Activated CD4-positive, alpha-beta memory T cell treated with anti-CD3 and anti-CD28 coated beads for 36 hours (primary cell): ENCODE measurements at regions of chr2 and their contacts with region 1.

Region 1: DNA sequence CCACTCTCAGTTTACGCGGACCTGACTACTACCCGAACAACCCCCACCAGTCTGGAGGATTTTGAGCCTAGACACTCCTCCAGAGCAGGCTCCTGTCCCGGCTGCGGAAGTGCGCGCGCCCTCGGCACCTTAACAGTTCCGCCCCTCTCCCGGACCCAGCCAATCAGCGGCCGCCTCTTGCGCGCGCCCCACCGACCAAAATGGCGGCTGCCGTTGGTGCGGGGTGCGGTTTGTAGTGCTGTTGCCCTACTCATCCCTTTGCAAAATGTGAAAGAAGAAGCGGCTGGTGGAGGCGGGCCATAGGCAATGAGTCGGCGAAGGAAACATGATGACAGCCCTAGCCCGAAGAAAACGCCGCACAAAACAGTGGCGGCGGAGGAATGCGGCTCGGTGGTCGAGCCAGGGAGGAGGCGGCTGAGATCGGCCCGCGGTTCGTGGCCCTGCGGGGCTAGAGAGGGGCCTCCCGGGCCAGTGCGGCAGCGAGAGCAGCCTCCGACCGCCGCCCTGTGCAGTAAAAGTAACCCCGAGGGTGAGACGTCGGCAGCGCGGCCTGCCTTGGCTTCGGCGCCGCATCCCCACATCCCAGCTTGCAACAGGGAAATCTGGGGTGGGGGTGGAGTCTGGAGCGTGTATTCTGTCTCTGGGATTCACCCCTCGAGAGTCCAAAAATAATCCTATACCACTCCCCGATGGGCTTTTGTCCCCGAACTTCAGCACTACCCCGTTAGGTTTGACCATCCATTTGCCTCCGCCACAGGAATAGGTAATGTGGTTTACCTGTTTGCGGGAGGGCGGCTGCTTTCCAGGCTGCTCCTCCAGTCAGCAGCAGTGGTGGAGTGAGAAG is at the start of gene ETAA1:
- DNase-seq: peak; percentile 95
- H3K4me3 Mint-ChIP-seq: peak within 1 kb of the TSS; percentile 98
- H3K27ac Mint-ChIP-seq: peak within 1 kb of the TSS; percentile 98
- H3K4me1 Mint-ChIP-seq: peaks cover 15% of the 10 kb centered on the region
- H3K27me3 Mint-ChIP-seq: no peaks in the 10 kb centered on the region
- total RNA-seq, gene ETAA1: 10.8 to 11.7 TPM

Region 2: GRCh38 chr2:67096886-67097285 is 300.5 kb before region 1 on chr2:
- CTCF ChIA-PET with region 1: no interaction called
- POLR2A ChIA-PET with region 1: no interaction called
- intact Hi-C with region 1: no loop called
- DNase-seq: no peak
- H3K4me3 Mint-ChIP-seq: no peak overlapping the region
- H3K27ac Mint-ChIP-seq: no peak overlapping the region
- H3K4me1 Mint-ChIP-seq: no peaks in the 10 kb centered on the region
- H3K27me3 Mint-ChIP-seq: no peaks in the 10 kb centered on the region

Region 3: DNA sequence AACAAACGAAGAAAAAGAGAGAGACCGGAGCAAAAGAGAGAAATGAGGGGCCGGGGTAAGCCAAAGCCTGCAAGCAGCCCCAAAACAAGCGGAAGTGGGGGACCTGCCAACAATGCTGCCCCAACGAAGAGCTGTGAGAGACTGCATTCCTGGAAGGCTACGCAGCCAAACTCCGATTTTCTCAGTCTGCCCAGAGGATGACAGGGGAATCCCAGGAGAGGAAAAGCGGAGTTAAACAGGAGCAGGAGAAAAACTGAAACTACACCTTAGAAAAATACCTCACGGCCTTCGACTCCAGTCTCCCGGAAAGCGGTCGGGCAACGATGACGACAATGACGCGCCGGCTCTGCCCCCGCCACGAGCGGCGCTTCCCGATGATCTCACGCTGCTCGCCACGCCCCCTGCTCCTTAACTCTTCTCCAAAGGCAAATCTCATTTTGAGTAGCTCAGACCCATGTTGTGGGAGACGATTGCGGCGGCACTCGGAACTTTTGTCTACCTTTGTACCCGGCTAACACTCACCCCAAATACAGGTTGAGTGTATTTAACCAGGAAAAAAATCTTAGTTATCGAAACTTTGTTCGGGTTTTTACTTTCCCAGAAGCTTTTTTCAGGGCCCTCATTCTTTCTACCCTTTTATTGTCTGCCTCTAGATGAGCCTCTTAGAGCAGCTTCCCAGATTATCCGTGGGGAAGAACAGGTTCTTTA is 665.5 kb after region 1 on chr2 and contains the start of gene C1D:
- CTCF ChIA-PET with region 1: no interaction called
- POLR2A ChIA-PET with region 1: no interaction called
- intact Hi-C with region 1: loop called (anchors 5 kb)
- DNase-seq: peak; percentile 96
- H3K4me3 Mint-ChIP-seq: peak within 1 kb of the TSS; percentile 89
- H3K27ac Mint-ChIP-seq: peak within 1 kb of the TSS; percentile 92
- H3K4me1 Mint-ChIP-seq: peaks cover 37% of the 10 kb centered on the region
- H3K27me3 Mint-ChIP-seq: no peaks in the 10 kb centered on the region
- total RNA-seq, gene C1D: 20.8 to 23.1 TPM

Region 4: DNA sequence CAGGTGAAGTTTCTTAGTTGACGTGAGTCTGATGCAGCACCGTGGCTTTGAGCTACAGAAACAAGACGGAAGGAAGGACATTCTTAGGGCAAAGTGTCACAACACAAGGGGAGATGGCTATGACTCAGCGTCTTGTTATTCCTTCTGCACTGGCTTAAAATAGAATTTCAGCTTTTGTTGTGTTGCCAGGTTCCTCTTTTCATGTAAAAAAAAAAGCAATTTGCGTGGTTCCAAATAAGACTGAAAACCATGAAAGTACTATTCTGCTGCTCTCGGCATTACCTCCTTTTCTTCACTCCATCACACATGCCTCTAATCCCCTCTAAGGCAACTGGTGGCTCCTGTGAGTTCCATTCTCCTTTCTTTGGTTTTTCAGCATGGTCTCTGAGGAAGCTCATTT is 1765.7 kb after region 1 on chr2:
- CTCF ChIA-PET with region 1: no interaction called
- POLR2A ChIA-PET with region 1: no interaction called
- intact Hi-C with region 1: no loop called
- DNase-seq: no peak
- H3K4me3 Mint-ChIP-seq: no peak overlapping the region
- H3K27ac Mint-ChIP-seq: no peak overlapping the region
- H3K4me1 Mint-ChIP-seq: no peaks in the 10 kb centered on the region
- H3K27me3 Mint-ChIP-seq: peaks cover 30% of the 10 kb centered on the region